PC-9 (cell line): ENCODE measurements at regions of chr7 and their contacts with region 1.

Region 1: DNA sequence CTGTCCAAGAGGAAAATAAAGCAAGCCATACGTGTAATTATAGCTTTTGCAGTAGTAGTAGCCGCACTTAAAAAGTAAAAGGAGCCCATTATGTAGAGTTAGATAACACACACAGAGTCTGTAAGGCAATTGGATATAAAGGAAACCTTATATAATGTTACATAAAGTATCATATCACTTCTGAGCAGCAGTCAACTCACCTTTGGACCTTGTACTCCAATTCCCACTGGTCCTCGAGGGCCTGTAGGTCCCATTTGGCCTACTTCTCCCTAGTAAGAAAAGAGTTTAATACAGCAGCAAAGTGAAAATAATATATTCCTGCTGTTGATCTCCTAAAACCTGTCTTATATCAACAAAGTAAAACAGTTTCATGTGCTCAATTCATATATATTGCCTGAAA is 83.6 kb downstream of the COL28A1 start:
- DNase-seq: no peak
- H3K4me3 ChIP-seq: no peak overlapping the region
- H3K27ac ChIP-seq: no peak overlapping the region
- H3K4me1 ChIP-seq: no peaks in the 10 kb centered on the region
- H3K27me3 ChIP-seq: no peaks in the 10 kb centered on the region
- CTCF ChIP-seq: no peak

Region 2: DNA sequence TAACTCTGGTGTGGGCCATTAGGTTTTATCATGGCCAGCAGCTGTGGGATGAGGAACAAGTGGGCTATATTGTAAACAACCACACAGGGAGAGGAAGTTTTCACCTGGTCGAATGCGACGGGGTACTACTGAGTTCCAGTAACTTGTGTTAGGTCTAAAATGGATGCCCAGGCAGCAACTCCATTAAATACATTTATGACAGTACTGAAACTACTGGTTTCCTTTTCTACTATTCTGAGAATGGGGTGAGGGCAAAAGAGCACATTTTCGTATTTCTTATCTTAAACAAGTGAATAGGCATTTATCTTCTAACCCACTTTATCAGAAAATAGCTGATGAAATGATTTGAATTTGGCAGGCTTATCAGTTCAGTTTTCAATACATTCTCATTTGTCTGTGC is 160.0 kb before region 1 on chr7:
- CTCF ChIA-PET with region 1: no interaction called
- POLR2A ChIA-PET with region 1: no interaction called
- intact Hi-C with region 1: no loop called
- DNase-seq: no peak
- H3K4me3 ChIP-seq: no peak overlapping the region
- H3K27ac ChIP-seq: no peak overlapping the region
- H3K4me1 ChIP-seq: no peaks in the 10 kb centered on the region
- H3K27me3 ChIP-seq: no peaks in the 10 kb centered on the region
- CTCF ChIP-seq: no peak

Region 3: GRCh38 chr7:7438851-7439250 is 13.3 kb before region 1 on chr7:
- CTCF ChIA-PET with region 1: no interaction called
- POLR2A ChIA-PET with region 1: no interaction called
- intact Hi-C with region 1: no loop called
- DNase-seq: peak; percentile 48 to 95
- H3K4me3 ChIP-seq: no peak overlapping the region
- H3K27ac ChIP-seq: 0 out of 2 replicates have a peak overlapping the region, but pooled peaks have one; percentile 11
- H3K4me1 ChIP-seq: peaks cover 17% of the 10 kb centered on the region
- H3K27me3 ChIP-seq: no peaks in the 10 kb centered on the region
- CTCF ChIP-seq: no peak

Region 4: GRCh38 chr7:7498856-7499580 is 46.9 kb after region 1 on chr7:
- CTCF ChIA-PET with region 1: no interaction called
- POLR2A ChIA-PET with region 1: no interaction called
- intact Hi-C with region 1: loop called (anchors 1 kb)
- DNase-seq: no peak
- H3K4me3 ChIP-seq: no peak overlapping the region
- H3K27ac ChIP-seq: no peak overlapping the region
- H3K4me1 ChIP-seq: 0 out of 2 replicates have a peak, but pooled peaks cover 1% of the 10 kb centered on the region
- H3K27me3 ChIP-seq: no peaks in the 10 kb centered on the region
- CTCF ChIP-seq: no peak